RWPE1 (cell line): ENCODE measurements at regions of chr3 and their contacts with region 1.

Region 1: GRCh38 chr3:69161587-69162307 is 39.4 kb upstream of the LMOD3 start:
- DNase-seq: peak; percentile 59
- H3K27ac ChIP-seq: no peak overlapping the region
- CTCF ChIP-seq: peak; percentile 94

Region 2: GRCh38 chr3:69306239-69307185 is 144.8 kb after region 1 on chr3:
- CTCF ChIA-PET with region 1: interaction called, 18 read pairs
- POLR2A ChIA-PET with region 1: no interaction called
- DNase-seq: peak; percentile 56
- H3K27ac ChIP-seq: no peak overlapping the region; the same call in 1 of the 2 replicates
- CTCF ChIP-seq: peak; percentile 82